GM13976 (cell line): ENCODE measurements at regions of chr13 and their contacts with region 1.

Region 1: GRCh38 chr13:33931397-33932311 is 113.7 kb downstream of the RFC3 start:
- DNase-seq: no peak
- CTCF ChIP-seq: no peak

Region 2: GRCh38 chr13:35157143-35157755 is 1225.6 kb after region 1 on chr13:
- in situ Hi-C with region 1: loop called (anchors 25 kb)
- DNase-seq: peak; percentile 34
- CTCF ChIP-seq: peak; percentile 21